Left colon (tissue), 2 donors: ENCODE measurements at regions of chr16 and their contacts with region 1.

Region 1: DNA sequence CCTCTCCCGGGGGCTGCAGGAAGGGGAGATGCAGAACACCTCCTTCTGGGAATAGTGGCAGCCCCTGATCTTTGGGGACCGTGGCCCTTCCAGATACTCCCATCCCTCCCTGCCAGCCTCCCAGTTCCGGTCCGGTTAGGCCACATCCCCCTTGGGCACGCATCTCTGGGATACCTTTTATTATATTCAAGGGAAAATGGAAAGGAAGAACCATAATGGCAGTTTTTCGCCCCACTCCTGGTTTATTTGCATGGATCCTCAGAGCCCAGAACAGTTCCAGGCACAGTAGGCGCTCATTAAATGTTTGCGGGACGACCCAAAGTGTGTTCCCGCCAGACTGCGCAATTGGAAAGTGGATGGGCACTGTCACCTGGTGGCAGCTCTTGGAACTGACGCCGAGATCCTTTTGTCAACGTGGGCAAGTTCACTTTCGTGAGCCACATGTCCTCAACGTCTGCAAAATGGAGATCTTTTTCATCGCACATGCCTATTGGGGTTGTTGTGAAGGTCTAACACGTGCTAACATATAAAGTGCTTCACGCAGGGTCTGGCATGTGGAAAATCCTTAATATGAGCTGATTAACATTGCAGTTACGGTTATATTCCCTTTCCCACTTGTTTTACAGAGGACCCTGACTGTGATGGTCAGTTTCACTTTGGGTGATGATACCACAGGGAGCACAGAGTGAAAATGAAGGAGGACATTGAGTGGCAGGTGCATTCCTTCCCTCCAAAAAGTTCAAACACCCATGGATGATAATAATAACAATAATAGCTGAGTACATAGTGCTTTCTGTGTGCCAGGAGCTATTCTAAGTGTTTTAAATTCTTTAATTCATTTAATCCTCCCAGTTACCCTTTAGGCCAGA is 1.7 kb upstream of the GPRC5B start:
- DNase-seq: peak; percentile 51 to 83
- ATAC-seq: peak; percentile 76

Region 2: GRCh38 chr16:19601083-19601976 is 285.0 kb before region 1 on chr16:
- intact Hi-C with region 1: loop called (anchors 5 to 10 kb)
- DNase-seq: peak in 1 of 2 donors; percentile 22
- ATAC-seq: no peak

Region 3: GRCh38 chr16:19722269-19722952 is 163.9 kb before region 1 on chr16:
- intact Hi-C with region 1: loop called in 1 of 2 experiments (anchors 10 kb)
- DNase-seq: no peak
- ATAC-seq: no peak

Region 4: DNA sequence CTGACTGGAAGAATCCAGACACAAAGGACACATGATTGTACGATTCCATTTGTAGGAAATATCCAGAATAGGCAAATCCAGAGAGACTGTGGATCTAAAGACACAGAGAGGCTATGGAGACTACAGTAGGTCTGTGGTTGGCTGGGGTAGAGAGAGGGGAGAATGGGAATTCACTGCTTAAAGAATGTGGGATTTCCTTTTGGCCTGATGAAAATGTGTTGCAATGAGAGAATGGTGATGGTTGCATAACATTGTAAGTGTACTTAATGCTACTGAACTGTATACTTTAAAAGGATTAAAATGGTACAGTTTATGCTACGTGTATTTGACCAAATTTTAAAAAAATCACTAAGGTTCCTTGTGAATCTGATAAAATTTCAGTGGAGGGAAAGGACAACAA is 63.8 kb before region 1 on chr16:
- intact Hi-C with region 1: no loop called
- DNase-seq: no peak
- ATAC-seq: no peak

Region 5: GRCh38 chr16:20064931-20065330 is 178.6 kb after region 1 on chr16:
- intact Hi-C with region 1: no loop called
- DNase-seq: no peak
- ATAC-seq: no peak